ENCODE measurements at regions of chr7 and their contacts with region 1.

Region 1: GRCh38 chr7:37930226-37930948 is 9.9 kb downstream of the EPDR1 start:
- DNase-seq: peak; percentile 78
- ATAC-seq: peak; percentile 89
- H3K4me3 ChIP-seq: peak overlapping the region; percentile 15; the same call in 1 of the 2 replicates
- H3K27ac ChIP-seq: peak overlapping the region; percentile 52
- H3K4me1 ChIP-seq: peaks cover 16% of the 10 kb centered on the region
- H3K27me3 ChIP-seq: no peaks in the 10 kb centered on the region
- CTCF ChIP-seq: no peak

Region 2: DNA sequence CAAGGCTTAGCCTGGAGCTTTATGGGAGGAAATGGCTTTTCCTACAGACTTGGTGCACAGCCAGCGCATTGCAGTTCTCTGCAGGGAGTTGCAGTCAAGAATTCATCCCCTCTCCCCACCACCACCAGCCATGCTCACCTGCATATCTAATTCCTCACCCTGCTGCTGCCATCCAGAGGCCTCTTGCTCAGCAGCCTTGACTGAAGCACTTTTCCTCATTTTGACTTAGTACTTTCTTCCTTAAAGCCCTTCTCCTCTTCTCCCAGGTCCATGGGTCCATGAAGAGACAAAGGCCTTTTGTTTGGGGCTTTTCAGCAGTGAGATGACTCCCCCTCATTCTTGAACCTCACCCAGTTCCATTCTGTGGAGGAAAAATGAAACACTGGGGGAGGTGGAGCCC is 286.5 kb before region 1 on chr7:
- CTCF ChIA-PET with region 1: no interaction called
- POLR2A ChIA-PET with region 1: no interaction called
- intact Hi-C with region 1: no loop called
- DNase-seq: no peak
- ATAC-seq: no peak
- H3K4me3 ChIP-seq: no peak overlapping the region
- H3K27ac ChIP-seq: no peak overlapping the region
- H3K4me1 ChIP-seq: no peaks in the 10 kb centered on the region
- H3K27me3 ChIP-seq: no peaks in the 10 kb centered on the region
- CTCF ChIP-seq: no peak

Region 3: GRCh38 chr7:37977243-37977642 is 46.9 kb after region 1 on chr7:
- CTCF ChIA-PET with region 1: no interaction called
- POLR2A ChIA-PET with region 1: no interaction called
- intact Hi-C with region 1: loop called (anchors 1 kb)
- DNase-seq: peak; percentile 83
- ATAC-seq: peak; percentile 100
- H3K4me3 ChIP-seq: no peak overlapping the region
- H3K27ac ChIP-seq: peak overlapping the region; percentile 61
- H3K4me1 ChIP-seq: peaks cover 17% of the 10 kb centered on the region
- H3K27me3 ChIP-seq: no peaks in the 10 kb centered on the region
- CTCF ChIP-seq: no peak

Measured in PC-3 (cell line).